ENCODE measurements at regions of chr6 and their contacts with region 1.

Region 1: GRCh38 chr6:41545703-41546474 is at the start of gene FOXP4:
- DNase-seq: peak; percentile 91
- ATAC-seq: peak; percentile 84
- H3K4me3 ChIP-seq: peak within 1 kb of the TSS; percentile 35 to 75 (median 70)
- H3K4me3 Mint-ChIP-seq: peak within 1 kb of the TSS; percentile 95
- H3K27ac ChIP-seq: peak within 1 kb of the TSS; percentile 11 to 32
- H3K27ac Mint-ChIP-seq: peak within 1 kb of the TSS; percentile 91
- H3K4me1 ChIP-seq: peaks cover 25 to 39% of the 10 kb centered on the region in 2 donors
- H3K4me1 Mint-ChIP-seq: peaks cover 33% of the 10 kb centered on the region
- H3K27me3 ChIP-seq: peaks cover 0 to 3% (median 0%) of the 10 kb centered on the region in 4 experiments
- H3K27me3 Mint-ChIP-seq: no peaks in the 10 kb centered on the region
- CTCF ChIP-seq: no peak
- total RNA-seq, gene FOXP4: 37.5 and 38.7 TPM in 2 replicates

Region 2: DNA sequence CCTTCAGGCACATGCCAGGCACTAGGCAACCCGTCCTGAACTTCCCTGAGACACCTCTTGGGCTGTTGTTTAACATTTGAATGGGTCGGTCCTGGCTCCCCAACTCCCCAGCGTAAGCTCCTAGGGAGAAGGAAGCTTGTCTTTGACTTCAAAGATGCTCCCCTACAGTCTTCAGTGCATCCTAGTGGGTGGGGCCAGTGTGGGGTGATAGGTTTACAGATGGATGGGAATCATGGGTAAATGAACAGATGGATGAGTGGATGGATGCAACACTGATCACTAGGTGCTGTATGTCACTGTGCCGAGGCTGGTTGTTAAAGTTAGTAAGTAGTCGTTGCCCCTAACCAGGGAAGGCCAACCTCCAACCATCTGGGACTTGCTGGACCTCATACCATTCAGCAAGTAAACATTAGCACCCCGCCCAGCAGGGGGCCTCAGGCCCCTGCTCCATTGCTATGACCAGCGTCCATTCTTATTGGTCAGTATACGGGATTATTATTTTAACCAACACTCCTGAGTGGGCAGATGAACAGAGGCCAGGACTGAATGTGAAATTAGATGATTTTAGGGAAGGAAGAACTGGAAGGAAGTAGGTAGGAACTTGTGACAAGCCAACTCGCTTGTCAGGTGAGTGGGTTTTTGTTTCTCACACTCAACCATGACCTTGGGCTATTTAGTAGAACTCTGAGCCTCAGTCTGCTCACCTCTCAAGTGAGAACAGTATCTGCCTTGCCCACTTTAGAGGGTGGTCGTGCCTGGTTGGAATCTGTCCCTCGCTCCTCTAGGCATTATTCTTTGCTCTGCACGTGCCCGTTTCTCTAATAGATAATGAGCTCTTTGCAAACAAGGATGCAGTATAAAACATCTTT is 82.6 kb before region 1 on chr6:
- CTCF ChIA-PET with region 1: interaction called, 8 read pairs
- POLR2A ChIA-PET with region 1: no interaction called
- intact Hi-C with region 1: loop called (anchors 1 kb)
- DNase-seq: peak; percentile 65
- ATAC-seq: peak; percentile 68
- H3K4me3 ChIP-seq: no peak overlapping the region
- H3K4me3 Mint-ChIP-seq: no peak overlapping the region
- H3K27ac ChIP-seq: no peak overlapping the region
- H3K27ac Mint-ChIP-seq: no peak overlapping the region
- H3K4me1 ChIP-seq: peaks cover 8 to 10% of the 10 kb centered on the region in 2 donors
- H3K4me1 Mint-ChIP-seq: peaks cover 11% of the 10 kb centered on the region
- H3K27me3 ChIP-seq: peaks cover 0 to 21% (median 1%) of the 10 kb centered on the region in 4 experiments
- H3K27me3 Mint-ChIP-seq: peaks cover 38% of the 10 kb centered on the region
- CTCF ChIP-seq: peak; percentile 72

Region 3: DNA sequence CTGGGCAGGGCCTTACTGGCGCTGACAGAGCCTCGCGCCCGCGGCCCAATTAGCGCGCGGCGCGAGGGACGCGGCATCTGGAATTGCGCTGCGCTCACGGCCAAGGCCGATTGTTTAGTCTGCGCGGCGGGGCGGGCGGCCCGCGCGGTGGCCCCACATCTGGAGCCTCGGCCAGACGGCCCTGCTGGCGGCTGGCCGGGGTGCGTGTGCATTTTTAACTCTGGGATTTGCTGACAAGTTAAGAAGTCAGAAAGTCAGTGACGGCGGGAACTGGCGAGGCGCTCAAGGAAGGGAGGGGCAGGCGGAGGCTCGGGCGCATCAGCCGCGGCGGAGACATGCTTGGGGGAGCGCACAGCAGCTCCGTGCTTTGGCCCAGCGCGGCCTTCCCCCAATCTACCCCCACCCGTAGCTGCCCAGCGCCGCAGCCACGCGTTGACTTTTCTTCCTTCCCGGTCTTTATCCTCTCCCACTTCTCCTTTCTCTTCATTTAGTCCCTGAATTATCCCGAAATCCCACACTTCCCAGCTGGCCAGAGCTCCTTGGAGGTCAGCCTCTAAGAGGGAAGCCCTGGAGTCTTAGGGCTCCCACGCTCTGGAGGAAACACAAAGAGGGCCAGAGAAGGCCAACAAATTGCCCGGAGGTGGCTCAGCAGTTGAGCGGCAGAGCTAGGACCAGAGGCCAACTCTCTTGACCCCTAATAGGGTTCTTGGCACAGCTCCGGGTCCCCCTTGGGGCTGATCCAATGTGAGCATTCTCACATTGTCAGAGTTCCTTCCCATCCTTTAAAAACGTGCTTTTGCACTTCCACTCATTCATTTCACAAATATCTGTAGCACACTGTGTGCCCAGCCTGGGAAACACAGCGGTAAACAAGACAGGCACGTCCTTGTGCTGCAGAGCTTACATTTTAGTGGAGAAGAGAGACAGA is 40.5 kb before region 1 on chr6:
- CTCF ChIA-PET with region 1: interaction called, 5 read pairs
- POLR2A ChIA-PET with region 1: no interaction called
- intact Hi-C with region 1: loop called (anchors 1 kb)
- DNase-seq: peak; percentile 85
- ATAC-seq: peak; percentile 92
- H3K4me3 ChIP-seq: peak overlapping the region in 4 of 5 experiments; percentile 32 to 77 (median 57)
- H3K4me3 Mint-ChIP-seq: peak overlapping the region; percentile 92
- H3K27ac ChIP-seq: peak overlapping the region; percentile 55 to 69
- H3K27ac Mint-ChIP-seq: peak overlapping the region; percentile 91
- H3K4me1 ChIP-seq: peaks cover 29 to 34% of the 10 kb centered on the region in 2 donors
- H3K4me1 Mint-ChIP-seq: peaks cover 37% of the 10 kb centered on the region
- H3K27me3 ChIP-seq: peaks cover 0 to 15% (median 3%) of the 10 kb centered on the region in 4 experiments
- H3K27me3 Mint-ChIP-seq: peaks cover 14% of the 10 kb centered on the region
- CTCF ChIP-seq: no peak

Region 4: DNA sequence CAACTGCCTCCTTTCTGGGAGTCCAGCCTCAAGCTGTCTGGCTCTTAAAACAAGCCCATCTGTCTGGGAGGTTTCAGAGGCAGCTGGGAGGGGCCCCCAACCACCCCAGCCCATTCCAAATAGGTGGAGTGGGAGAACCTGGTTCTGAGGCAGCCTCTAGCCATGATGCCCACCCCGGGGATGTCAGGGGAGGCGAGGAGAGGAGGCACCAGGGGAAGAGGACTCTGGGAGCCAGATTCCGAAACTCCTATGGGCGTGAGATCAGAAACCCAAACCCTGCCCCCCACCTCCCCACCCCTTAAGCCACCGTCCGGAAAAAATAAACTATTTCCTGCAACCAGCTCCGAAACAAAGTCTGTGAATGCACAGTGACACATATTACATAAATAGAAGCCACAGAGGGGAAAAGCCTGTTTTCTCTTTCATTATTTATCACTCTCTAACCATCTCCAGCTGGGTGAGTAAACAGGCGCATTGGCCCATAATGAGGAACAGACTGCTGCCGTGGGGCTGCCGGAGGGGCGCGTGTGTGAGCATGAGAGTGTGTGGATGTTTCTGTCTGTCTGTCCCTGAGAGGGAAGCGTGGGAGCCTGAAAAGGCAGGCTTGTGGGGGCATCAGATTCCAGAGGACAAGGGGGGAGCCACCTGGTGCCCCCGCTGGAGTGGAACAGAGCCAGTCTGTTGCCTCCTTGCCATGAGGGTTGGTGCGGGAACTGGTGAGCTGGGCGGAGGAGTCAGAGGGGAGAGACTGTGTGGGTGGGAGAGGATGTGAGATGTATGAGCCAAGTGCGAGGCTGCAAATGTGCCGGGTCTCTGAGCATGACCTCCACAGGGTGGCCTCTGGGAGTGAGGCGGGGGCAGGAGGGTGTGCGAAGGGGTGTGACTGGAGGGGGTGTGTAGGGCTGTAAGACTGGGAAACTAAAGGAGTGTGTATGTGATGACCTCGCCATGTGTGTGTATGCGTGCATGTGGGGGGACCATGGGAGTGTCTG is 14.0 kb before region 1 on chr6:
- CTCF ChIA-PET with region 1: interaction called, 4 read pairs
- POLR2A ChIA-PET with region 1: interaction called, 10 read pairs
- intact Hi-C with region 1: loop called (anchors 1 kb)
- DNase-seq: peak; percentile 86
- ATAC-seq: peak; percentile 82
- H3K4me3 ChIP-seq: peak overlapping the region in 4 of 5 experiments; percentile 29 to 48 (median 40)
- H3K4me3 Mint-ChIP-seq: peak overlapping the region; percentile 81
- H3K27ac ChIP-seq: peak overlapping the region; percentile 80 to 87
- H3K27ac Mint-ChIP-seq: peak overlapping the region; percentile 94
- H3K4me1 ChIP-seq: peaks cover 40 to 56% of the 10 kb centered on the region in 2 donors
- H3K4me1 Mint-ChIP-seq: peaks cover 68% of the 10 kb centered on the region
- H3K27me3 ChIP-seq: peaks cover 0 to 2% (median 0%) of the 10 kb centered on the region in 4 experiments
- H3K27me3 Mint-ChIP-seq: peaks cover 6% of the 10 kb centered on the region
- CTCF ChIP-seq: no peak

Region 5: GRCh38 chr6:41560431-41561192 is 14.7 kb after region 1 on chr6:
- CTCF ChIA-PET with region 1: interaction called, 6 read pairs
- POLR2A ChIA-PET with region 1: no interaction called
- intact Hi-C with region 1: loop called (anchors 1 kb)
- DNase-seq: peak; percentile 91
- ATAC-seq: peak; percentile 86
- H3K4me3 ChIP-seq: peak overlapping the region; percentile 53 to 86 (median 75)
- H3K4me3 Mint-ChIP-seq: peak overlapping the region; percentile 91
- H3K27ac ChIP-seq: peak overlapping the region; percentile 58 to 92
- H3K27ac Mint-ChIP-seq: peak overlapping the region; percentile 84
- H3K4me1 ChIP-seq: peaks cover 16 to 24% of the 10 kb centered on the region in 2 donors
- H3K4me1 Mint-ChIP-seq: peaks cover 39% of the 10 kb centered on the region
- H3K27me3 ChIP-seq: no peaks in the 10 kb centered on the region
- H3K27me3 Mint-ChIP-seq: no peaks in the 10 kb centered on the region
- CTCF ChIP-seq: no peak

Region 6: DNA sequence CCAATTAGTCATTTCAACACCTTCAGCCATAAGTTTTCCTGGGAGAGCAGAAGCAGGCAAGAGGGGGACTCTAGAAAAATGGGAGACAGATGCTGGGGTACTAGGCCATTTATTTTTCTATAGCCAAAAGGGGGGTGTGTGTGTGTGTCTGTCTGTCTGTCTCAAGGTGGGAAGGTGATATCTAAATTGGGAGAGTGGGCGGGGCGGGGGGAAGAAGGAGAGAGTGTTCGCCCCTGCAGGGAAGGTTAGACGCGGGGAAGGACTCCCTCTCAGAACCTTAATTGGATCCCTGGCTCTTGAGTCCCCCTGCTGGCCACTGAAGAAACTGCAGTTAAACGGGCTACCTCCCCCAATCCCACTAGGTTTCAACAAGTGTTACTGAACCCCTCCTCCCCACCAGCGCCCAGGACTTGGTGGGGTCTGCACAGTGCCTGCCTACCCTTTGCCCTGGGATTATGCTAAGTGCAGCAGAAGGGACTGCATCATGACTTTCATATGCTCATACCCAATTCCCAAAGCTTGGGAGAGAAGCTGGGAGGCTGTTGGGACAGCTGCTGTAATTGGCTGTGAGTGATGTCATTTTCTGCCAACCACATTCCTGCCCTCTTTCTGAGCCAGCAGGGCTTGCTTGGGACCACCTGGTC is 46.1 kb after region 1 on chr6:
- CTCF ChIA-PET with region 1: no interaction called
- POLR2A ChIA-PET with region 1: no interaction called
- intact Hi-C with region 1: loop called (anchors 1 kb)
- DNase-seq: peak; percentile 83
- ATAC-seq: peak; percentile 84
- H3K4me3 ChIP-seq: no peak overlapping the region
- H3K4me3 Mint-ChIP-seq: no peak overlapping the region
- H3K27ac ChIP-seq: no peak overlapping the region
- H3K27ac Mint-ChIP-seq: no peak overlapping the region
- H3K4me1 ChIP-seq: peaks cover 0 to 3% of the 10 kb centered on the region in 2 donors
- H3K4me1 Mint-ChIP-seq: peaks cover 2% of the 10 kb centered on the region
- H3K27me3 ChIP-seq: no peaks in the 10 kb centered on the region
- H3K27me3 Mint-ChIP-seq: no peaks in the 10 kb centered on the region
- CTCF ChIP-seq: peak; percentile 87

Region 7: GRCh38 chr6:41705996-41706835 is 160.3 kb after region 1 on chr6:
- CTCF ChIA-PET with region 1: no interaction called
- POLR2A ChIA-PET with region 1: no interaction called
- intact Hi-C with region 1: loop called (anchors 5 kb)
- DNase-seq: peak; percentile 94
- ATAC-seq: peak; percentile 81
- H3K4me3 ChIP-seq: peak overlapping the region in 4 of 5 experiments; percentile 33 to 65 (median 56)
- H3K4me3 Mint-ChIP-seq: peak overlapping the region; percentile 86
- H3K27ac ChIP-seq: peak overlapping the region; percentile 83 to 96
- H3K27ac Mint-ChIP-seq: peak overlapping the region; percentile 100
- H3K4me1 ChIP-seq: peaks cover 84 to 87% of the 10 kb centered on the region in 2 donors
- H3K4me1 Mint-ChIP-seq: peaks cover 97% of the 10 kb centered on the region
- H3K27me3 ChIP-seq: no peaks in the 10 kb centered on the region
- H3K27me3 Mint-ChIP-seq: no peaks in the 10 kb centered on the region
- CTCF ChIP-seq: peak; percentile 89